ENCODE measurements at regions of chr6 and their contacts with region 1.

Region 1: GRCh38 chr6:148578245-148578732 is 168.5 kb upstream of the UST start:
- DNase-seq: peak; percentile 57 to 88 (median 71)
- ATAC-seq: peak; percentile 98 to 100 (median 100)
- H3K4me3 ChIP-seq: no peak overlapping the region
- H3K27ac ChIP-seq: no peak overlapping the region
- H3K4me1 ChIP-seq: no peaks in the 10 kb centered on the region
- H3K27me3 ChIP-seq: no peaks in the 10 kb centered on the region
- CTCF ChIP-seq: peak in 3 of 4 donors; percentile 53 to 61 (median 55)

Region 2: DNA sequence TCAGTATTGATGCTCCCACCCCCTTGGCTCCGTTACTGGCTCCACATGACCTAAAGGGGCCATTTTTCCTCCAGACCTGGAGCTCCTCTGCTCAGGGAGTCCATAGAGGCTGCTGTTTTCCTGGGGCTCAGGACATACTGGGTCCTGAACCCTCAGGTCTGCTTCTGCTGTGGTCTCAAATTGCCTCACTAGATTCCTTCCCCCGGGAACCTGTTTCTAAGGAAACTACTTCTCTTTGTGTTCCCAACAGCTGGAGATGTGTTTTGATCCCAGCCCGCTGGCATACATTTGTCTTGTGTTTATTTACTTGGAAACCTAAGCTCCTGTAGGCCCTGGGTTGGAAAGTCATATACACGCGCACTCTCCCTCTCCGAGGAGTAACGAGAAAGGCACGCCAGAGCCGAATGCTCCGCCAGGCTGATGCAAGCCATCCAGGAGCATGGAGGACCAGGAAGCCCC is 391.3 kb after region 1 on chr6:
- intact Hi-C with region 1: loop called in 1 of 3 experiments (anchors 10 kb)
- DNase-seq: no peak
- ATAC-seq: no peak
- H3K4me3 ChIP-seq: no peak overlapping the region
- H3K27ac ChIP-seq: no peak overlapping the region
- H3K4me1 ChIP-seq: no peaks in the 10 kb centered on the region
- H3K27me3 ChIP-seq: no peaks in the 10 kb centered on the region
- CTCF ChIP-seq: no peak